ENCODE measurements at regions of chr5 and their contacts with region 1.

Region 1: GRCh38 chr5:77832166-77832770 is 56.1 kb upstream of the TBCA start:
- DNase-seq: no peak
- ATAC-seq: no peak

Region 2: GRCh38 chr5:76489877-76490688 is 1342.2 kb before region 1 on chr5:
- intact Hi-C with region 1: no loop called
- DNase-seq: no peak
- ATAC-seq: no peak

Region 3: GRCh38 chr5:77893225-77893860 is 61.1 kb after region 1 on chr5:
- intact Hi-C with region 1: loop called (anchors 2 kb)
- DNase-seq: no peak
- ATAC-seq: no peak

Measured in sciatic nerve (tissue), 2 donors.